B cell (primary cell): ENCODE measurements at regions of chr1 and their contacts with region 1.

Region 1: DNA sequence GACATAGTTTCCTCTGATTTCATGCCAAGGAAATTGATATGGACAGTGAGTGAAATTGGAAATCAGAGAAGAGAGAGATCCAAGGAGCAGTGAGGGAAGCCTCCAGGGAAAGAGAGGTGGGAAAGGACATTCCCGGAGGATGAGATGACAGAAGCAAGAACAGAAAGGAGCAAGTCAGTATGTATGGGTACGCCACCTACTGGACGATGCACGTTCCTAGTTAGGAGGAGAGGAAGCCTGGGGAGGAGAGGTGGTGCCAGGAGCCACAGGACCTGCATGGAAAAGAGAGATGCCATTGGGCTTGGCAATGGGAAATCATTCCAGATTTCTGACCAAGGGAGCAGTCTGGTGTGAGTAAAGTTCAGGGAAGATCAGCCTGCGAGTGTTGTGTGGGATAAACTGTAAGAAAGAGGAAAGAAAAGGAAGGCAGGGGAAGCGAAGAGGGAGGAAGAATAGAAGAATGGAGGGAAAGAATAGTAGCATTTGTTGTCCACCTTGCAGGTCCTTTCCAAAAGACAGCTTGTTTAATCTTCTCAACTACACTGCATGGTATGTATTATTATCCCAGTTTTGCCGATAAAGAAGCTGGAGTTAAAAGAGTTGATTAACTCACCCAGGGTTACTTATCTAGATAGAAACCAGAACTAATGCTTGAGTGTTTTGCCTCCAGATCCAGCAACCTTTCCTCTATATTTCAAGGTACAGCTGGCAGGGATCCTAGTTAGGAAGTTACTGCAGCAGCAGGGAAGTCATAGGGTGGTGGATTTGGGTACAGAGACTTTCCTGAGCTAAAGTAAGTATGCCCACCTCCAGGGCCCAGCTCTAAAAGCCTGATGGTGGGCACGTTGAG is 27.4 kb downstream of the C1orf116 start:
- DNase-seq: peak; percentile 57
- ATAC-seq: peak; percentile 47
- H3K4me3 ChIP-seq: no peak overlapping the region
- H3K4me3 Mint-ChIP-seq: no peak overlapping the region
- H3K27ac ChIP-seq: no peak overlapping the region
- H3K27ac Mint-ChIP-seq: no peak overlapping the region
- H3K4me1 ChIP-seq: peaks cover 3 to 4% of the 10 kb centered on the region in 2 donors
- H3K4me1 Mint-ChIP-seq: peaks cover 2% of the 10 kb centered on the region
- H3K27me3 ChIP-seq: peaks cover 0 to 9% (median 2%) of the 10 kb centered on the region in 4 experiments
- H3K27me3 Mint-ChIP-seq: peaks cover 17% of the 10 kb centered on the region
- CTCF ChIP-seq: peak; percentile 87

Region 2: GRCh38 chr1:207017615-207018559 is 12.7 kb after region 1 on chr1:
- CTCF ChIA-PET with region 1: interaction called, 21 read pairs
- POLR2A ChIA-PET with region 1: no interaction called
- intact Hi-C with region 1: no loop called
- DNase-seq: no peak
- ATAC-seq: no peak
- H3K4me3 ChIP-seq: no peak overlapping the region
- H3K4me3 Mint-ChIP-seq: no peak overlapping the region
- H3K27ac ChIP-seq: no peak overlapping the region
- H3K27ac Mint-ChIP-seq: no peak overlapping the region
- H3K4me1 ChIP-seq: no peaks in the 10 kb centered on the region
- H3K4me1 Mint-ChIP-seq: no peaks in the 10 kb centered on the region
- H3K27me3 ChIP-seq: peaks cover 0 to 17% (median 5%) of the 10 kb centered on the region in 4 experiments
- H3K27me3 Mint-ChIP-seq: peaks cover 47% of the 10 kb centered on the region
- CTCF ChIP-seq: no peak

Region 3: DNA sequence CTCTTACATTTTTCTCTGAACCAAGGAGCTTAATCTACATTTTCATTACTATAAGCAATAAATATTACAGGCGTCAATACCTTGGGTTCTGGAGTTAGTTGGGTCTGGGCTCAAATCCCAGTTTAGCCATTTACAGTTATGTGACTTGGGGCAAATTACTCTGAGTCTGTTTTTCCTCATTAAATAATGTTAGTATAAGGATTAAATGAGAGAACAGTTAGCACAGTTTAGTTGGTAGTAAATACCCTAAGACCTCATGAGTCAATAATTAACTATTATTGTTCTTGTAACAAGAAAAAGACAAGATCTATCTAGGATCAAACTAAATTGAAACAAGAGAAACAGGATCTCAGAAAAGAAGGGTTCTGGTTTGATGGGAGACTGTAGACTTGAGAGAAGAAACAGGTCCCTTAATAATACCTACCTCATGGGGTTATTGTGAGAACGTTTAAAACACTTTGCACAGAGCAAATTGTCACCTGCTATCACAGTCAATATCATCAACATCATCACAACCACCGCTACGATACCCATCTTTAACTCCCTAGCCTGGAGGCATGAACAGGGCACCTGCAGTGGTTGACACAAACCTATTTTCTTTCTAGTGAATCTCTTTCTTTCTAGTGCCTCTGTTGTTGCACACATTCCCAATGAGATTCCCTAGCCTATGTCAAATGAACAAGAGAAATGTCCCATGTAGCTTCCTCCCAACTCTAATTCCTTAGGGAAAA is 22.9 kb after region 1 on chr1:
- CTCF ChIA-PET with region 1: no interaction called
- POLR2A ChIA-PET with region 1: no interaction called
- intact Hi-C with region 1: no loop called
- DNase-seq: no peak
- ATAC-seq: no peak
- H3K4me3 ChIP-seq: no peak overlapping the region
- H3K4me3 Mint-ChIP-seq: no peak overlapping the region
- H3K27ac ChIP-seq: no peak overlapping the region
- H3K27ac Mint-ChIP-seq: no peak overlapping the region
- H3K4me1 ChIP-seq: no peaks in the 10 kb centered on the region
- H3K4me1 Mint-ChIP-seq: no peaks in the 10 kb centered on the region
- H3K27me3 ChIP-seq: peaks cover 0 to 36% (median 21%) of the 10 kb centered on the region in 4 experiments
- H3K27me3 Mint-ChIP-seq: peaks cover 60% of the 10 kb centered on the region
- CTCF ChIP-seq: no peak

Region 4: DNA sequence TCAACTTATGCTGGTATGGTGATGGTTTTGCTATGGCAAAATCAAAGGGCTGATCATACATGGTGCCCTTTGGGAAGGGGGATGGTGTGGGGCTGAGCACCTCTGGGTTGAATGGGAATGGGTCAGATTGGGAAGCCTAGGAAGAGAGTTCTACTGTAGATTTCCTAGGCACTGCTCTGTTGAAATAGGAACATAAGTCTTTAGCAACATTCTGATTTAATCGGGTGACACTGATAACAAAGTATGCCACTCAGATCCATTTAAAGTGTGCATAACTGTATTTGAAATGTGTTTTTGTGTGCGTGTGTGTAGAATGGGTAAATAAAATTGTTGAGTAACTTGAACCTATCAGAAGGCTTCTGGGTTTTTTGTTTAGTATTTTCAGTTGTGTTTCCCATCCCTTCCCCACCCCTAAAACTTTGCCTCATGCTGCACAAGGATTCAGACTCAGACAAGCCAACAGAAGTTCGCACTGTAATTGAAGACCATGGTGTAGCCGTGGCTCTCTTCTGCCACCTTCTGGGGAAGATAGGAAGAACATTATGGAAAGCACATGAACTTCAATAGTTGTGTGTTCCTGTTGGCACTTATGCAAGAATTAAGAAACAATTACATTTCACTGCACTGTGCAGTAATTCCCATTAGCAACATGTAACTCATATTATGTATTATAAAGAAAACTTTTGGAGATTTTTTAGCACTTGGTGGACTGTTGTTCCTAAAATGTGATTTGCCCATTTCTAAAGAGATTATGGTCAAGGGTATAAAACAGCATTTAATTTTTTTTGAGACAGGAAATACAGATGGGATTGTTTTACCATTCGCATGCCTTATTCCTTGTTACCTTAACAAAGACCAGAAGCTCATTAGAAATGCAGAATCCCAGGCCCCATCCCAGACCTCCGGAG is 72.5 kb after region 1 on chr1:
- CTCF ChIA-PET with region 1: interaction called, 4 read pairs
- POLR2A ChIA-PET with region 1: no interaction called
- intact Hi-C with region 1: loop called (anchors 5 kb)
- DNase-seq: peak; percentile 83
- ATAC-seq: peak; percentile 95
- H3K4me3 ChIP-seq: no peak overlapping the region
- H3K4me3 Mint-ChIP-seq: no peak overlapping the region
- H3K27ac ChIP-seq: no peak overlapping the region
- H3K27ac Mint-ChIP-seq: no peak overlapping the region
- H3K4me1 ChIP-seq: no peaks in the 10 kb centered on the region
- H3K4me1 Mint-ChIP-seq: peaks cover 1% of the 10 kb centered on the region
- H3K27me3 ChIP-seq: no peaks in the 10 kb centered on the region
- H3K27me3 Mint-ChIP-seq: no peaks in the 10 kb centered on the region
- CTCF ChIP-seq: peak; percentile 96

Region 5: DNA sequence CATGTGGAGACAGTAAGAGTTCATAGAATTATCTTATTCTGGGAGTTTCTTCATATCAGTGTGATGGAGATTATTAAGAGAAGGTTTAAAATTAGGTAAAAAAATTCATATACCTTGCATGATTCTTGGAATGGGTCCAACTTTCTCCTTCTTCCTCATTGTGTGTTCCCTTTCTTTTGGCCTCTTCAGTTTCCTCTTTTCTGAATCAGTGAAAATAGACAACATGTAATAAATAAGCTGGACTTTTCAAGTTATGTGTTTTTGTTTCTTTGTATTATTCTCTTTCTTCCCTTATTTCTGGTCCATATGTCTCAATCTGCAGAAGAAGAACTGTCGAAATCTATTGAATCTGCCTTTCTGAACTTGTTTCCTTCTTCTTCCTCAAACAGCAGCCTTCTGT is 129.4 kb after region 1 on chr1:
- CTCF ChIA-PET with region 1: no interaction called
- POLR2A ChIA-PET with region 1: no interaction called
- intact Hi-C with region 1: no loop called
- DNase-seq: no peak
- ATAC-seq: no peak
- H3K4me3 ChIP-seq: no peak overlapping the region
- H3K4me3 Mint-ChIP-seq: no peak overlapping the region
- H3K27ac ChIP-seq: no peak overlapping the region
- H3K27ac Mint-ChIP-seq: no peak overlapping the region
- H3K4me1 ChIP-seq: no peaks in the 10 kb centered on the region
- H3K4me1 Mint-ChIP-seq: no peaks in the 10 kb centered on the region
- H3K27me3 ChIP-seq: no peaks in the 10 kb centered on the region
- H3K27me3 Mint-ChIP-seq: peaks cover 5% of the 10 kb centered on the region
- CTCF ChIP-seq: no peak